ENCODE measurements at regions of chr1 and their contacts with region 1.

Region 1: DNA sequence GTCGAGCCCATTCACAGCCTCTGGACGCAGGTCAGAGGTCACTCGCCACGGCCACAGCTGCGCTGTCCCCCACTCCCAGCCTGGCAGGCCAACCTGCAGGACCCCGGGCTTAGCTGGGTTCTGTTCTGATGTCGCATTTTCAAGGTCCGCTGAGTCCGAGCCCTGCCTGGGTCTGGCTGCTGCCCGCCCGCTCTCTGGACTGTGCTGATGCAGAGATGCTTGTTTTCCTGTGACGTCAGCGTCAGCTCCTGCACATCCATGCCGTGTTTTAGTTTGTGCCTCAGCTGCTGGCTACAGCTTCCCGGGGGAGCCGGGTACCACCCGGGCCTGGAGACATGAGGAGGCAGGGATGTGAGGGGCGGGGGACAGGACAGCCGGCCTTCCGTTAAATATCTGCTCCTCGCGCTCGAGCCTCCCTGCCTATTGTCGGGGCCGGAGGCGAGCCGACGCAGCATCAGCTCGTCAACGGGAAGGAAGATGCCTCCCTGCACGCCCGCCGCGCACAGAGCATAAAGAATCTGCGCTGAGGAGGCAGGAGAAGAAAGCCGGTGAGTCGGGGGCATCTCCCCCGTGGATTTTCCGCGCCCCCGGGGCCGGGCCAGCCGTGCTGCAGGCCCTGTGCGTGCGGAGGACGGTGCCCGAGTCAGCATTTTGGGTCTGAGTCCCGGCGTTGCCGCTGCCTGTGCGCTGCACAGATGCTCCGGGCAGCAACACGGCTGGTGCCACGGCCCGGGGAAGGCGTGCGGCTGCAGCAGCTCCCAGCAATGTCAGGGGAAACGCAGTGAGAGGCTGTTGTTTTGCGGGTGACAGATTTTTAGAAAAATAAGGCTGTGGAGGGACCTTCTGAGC is 23.4 kb downstream of the PRKCZ start:
- DNase-seq: no peak
- H3K4me3 ChIP-seq: no peak overlapping the region
- H3K27ac ChIP-seq: no peak overlapping the region
- H3K4me1 ChIP-seq: no peaks in the 10 kb centered on the region
- H3K27me3 ChIP-seq: no peaks in the 10 kb centered on the region
- CTCF ChIP-seq: no peak

Region 2: DNA sequence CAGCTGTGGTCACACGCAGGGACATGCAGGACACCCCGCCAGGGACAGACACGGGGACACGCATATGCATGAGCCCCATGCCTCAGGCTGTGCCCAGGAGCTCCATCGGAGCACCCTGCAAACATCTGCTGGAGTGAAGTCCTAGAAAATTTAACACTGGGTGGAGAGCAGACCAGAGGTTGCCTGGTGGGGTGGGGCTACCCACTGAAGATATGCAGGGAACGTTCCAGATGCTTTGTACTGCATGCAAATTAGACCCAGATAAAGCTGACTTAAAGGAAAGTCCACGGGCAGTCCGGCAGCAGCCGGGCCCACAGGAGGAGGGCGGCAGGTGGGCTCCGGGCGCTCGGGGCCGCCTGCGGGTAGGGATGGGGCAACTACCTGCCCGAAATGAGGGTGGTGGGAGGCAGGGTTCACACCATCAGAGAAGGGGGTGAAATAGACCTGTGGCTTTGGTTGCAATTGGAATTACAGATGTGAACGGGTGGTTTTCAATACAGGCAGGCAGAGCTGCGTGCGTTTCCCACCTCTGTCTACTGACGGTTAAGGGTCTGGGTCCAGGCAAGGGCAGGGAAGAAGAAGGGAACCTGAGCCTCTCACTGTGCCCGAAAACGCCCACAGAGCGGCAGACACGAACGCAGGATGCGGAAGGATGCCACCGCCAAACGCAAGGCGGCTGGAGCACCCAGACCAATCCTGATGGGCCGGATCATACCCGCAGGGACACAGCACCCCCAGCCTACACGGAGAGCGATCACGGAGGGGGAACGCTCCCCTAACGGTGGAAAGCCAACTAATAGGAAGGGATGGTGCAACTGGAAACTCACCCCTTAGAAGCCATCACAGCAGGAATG is 91.0 kb before region 1 on chr1:
- CTCF ChIA-PET with region 1: no interaction called
- dilution Hi-C with region 1: loop called (anchors 5 kb)
- in situ Hi-C with region 1: no loop called
- intact Hi-C with region 1: no loop called
- DNase-seq: no peak
- H3K4me3 ChIP-seq: no peak overlapping the region
- H3K27ac ChIP-seq: no peak overlapping the region
- H3K4me1 ChIP-seq: no peaks in the 10 kb centered on the region
- H3K27me3 ChIP-seq: no peaks in the 10 kb centered on the region
- CTCF ChIP-seq: no peak

Region 3: DNA sequence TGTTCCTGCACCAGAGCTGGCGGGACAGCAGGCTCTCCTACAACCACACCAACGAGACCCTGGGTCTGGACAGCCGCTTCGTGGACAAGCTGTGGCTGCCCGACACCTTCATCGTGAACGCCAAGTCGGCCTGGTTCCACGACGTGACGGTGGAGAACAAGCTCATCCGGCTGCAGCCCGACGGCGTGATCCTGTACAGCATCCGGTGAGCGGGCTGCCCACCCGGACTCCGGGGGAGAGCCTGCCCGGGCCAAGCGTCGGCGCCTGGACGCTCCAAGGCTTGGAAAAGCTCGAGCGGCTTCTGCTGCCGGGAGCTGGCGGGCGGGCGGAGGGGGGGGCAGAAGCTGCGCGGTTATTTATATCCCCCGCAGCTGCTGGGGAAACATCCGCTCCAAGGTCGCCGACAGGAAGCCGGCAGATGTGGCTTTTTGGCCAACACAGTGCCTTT is 48.0 kb before region 1 on chr1:
- CTCF ChIA-PET with region 1: no interaction called
- dilution Hi-C with region 1: loop called (anchors 10 kb)
- in situ Hi-C with region 1: no loop called
- intact Hi-C with region 1: no loop called
- DNase-seq: no peak
- H3K4me3 ChIP-seq: no peak overlapping the region
- H3K27ac ChIP-seq: no peak overlapping the region
- H3K4me1 ChIP-seq: no peaks in the 10 kb centered on the region
- H3K27me3 ChIP-seq: peaks cover 3% of the 10 kb centered on the region
- CTCF ChIP-seq: no peak

Region 4: DNA sequence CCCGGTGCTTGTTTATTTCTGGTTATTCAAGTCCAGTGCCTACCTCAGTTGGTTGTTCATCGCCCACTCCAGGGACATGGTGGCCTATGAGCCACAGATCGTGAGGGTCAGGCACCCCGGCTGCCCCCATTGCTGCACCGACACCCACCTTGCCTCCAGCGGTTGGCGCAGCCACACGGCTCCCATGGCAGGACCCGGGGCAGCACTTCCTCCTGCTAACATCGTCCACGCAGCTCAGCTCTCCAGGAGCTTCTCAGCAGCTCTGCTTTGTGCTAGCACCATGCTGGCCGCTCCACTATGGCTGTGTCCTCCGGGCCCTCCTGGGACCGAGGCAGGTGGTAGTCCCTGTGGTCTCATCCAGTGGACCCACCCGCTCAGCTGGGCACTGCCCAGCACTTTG is 37.3 kb before region 1 on chr1:
- CTCF ChIA-PET with region 1: no interaction called
- dilution Hi-C with region 1: no loop called
- in situ Hi-C with region 1: no loop called
- intact Hi-C with region 1: no loop called
- DNase-seq: no peak
- H3K4me3 ChIP-seq: no peak overlapping the region
- H3K27ac ChIP-seq: no peak overlapping the region
- H3K4me1 ChIP-seq: no peaks in the 10 kb centered on the region
- H3K27me3 ChIP-seq: peaks cover 2% of the 10 kb centered on the region
- CTCF ChIP-seq: no peak

Region 5: GRCh38 chr1:2112280-2112701 is 38.7 kb after region 1 on chr1:
- CTCF ChIA-PET with region 1: no interaction called
- dilution Hi-C with region 1: loop called (anchors 5 kb)
- in situ Hi-C with region 1: no loop called
- intact Hi-C with region 1: no loop called
- DNase-seq: no peak
- H3K4me3 ChIP-seq: no peak overlapping the region
- H3K27ac ChIP-seq: no peak overlapping the region
- H3K4me1 ChIP-seq: no peaks in the 10 kb centered on the region
- H3K27me3 ChIP-seq: no peaks in the 10 kb centered on the region
- CTCF ChIP-seq: no peak

Region 6: GRCh38 chr1:2158272-2158671 is 84.7 kb after region 1 on chr1:
- CTCF ChIA-PET with region 1: no interaction called
- dilution Hi-C with region 1: loop called (anchors 5 kb)
- in situ Hi-C with region 1: no loop called
- intact Hi-C with region 1: no loop called
- DNase-seq: no peak
- H3K4me3 ChIP-seq: no peak overlapping the region
- H3K27ac ChIP-seq: no peak overlapping the region
- H3K4me1 ChIP-seq: no peaks in the 10 kb centered on the region
- H3K27me3 ChIP-seq: no peaks in the 10 kb centered on the region
- CTCF ChIP-seq: no peak

Region 7: DNA sequence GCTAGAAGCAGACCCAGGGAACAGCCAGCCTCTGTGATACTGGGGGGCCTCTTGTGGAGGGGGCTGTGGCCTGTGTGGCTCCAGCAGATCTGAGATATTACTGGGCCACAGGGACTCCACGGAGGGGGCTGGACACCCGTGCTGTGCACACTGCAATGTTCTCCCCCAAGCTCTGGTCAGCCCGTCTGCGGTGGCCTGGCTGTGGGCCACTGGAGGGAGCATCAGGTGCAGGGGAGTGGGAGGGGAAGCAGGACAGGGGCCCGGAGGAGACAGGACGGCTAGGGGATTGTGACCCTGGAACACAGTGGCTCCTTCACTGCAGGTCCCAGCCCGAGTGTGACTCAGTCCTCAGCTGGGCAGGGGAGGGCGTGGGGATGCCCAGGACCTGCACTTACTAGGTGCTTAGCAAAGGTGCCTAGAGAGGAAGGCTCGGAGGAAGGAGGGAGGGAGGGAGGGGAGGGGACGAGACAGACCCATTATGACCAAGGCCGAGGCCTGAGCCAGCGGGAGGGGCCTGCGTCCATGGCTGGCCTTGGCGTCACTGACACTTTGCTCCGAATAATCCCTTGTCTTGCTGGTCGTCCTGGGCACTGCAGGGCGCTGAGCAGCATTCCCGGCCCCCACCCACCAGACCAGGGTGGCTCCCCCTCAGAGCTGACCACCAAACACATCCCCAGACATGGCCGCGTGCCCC is 1039.6 kb after region 1 on chr1:
- CTCF ChIA-PET with region 1: no interaction called
- dilution Hi-C with region 1: no loop called
- in situ Hi-C with region 1: no loop called
- intact Hi-C with region 1: no loop called
- DNase-seq: no peak
- H3K4me3 ChIP-seq: no peak overlapping the region
- H3K27ac ChIP-seq: no peak overlapping the region
- H3K4me1 ChIP-seq: no peaks in the 10 kb centered on the region
- H3K27me3 ChIP-seq: no peaks in the 10 kb centered on the region
- CTCF ChIP-seq: no peak

Measured in mammary epithelial cell (primary cell).